Right lobe of liver (tissue), 6 donors: ENCODE measurements at regions of chr7 and their contacts with region 1.

Region 1: DNA sequence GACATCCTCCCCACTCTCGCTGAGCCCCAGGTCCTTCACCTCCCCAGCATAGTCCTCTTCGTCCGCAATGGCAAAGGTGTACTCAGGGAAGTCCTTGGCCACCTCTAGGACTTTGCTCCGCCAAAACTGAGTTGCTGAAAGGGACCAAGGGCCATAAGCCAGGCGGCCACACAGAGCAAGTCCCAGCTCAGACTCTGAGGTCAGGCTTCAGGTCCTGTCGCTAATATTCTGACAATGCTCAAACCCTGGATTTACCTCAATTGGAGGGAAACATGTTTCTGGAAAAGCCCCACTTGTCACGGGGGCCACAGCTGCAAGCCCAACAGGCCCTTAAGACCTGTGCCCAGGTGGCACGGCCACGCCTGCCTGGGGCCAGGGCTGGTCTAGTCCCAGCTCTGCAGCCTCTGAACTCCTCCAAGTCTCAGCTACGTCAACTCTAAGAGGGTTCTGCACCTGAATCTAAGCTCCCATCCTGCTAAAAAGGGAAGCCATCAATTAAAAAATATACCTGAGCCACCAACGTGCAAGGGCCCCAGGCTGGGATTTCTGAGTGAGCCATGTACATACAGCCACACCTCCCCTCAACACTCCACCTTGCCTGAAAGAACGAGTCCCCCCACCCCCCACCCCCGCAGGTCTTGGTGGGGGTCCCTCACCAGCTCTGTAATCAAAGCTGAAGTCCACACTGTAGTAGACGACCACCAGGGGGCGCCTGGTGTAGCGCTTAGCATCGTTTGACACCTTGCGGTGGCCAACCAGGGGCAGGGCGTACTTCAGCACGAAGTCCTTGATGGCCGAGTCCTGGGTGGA is 22.9 kb downstream of the PDIA4 start:
- DNase-seq: peak; percentile 76 to 83 (median 82)
- ATAC-seq: peak; percentile 68 to 85 (median 76)
- H3K4me3 ChIP-seq: no peak overlapping the region
- H3K27ac ChIP-seq: no peak overlapping the region
- H3K4me1 ChIP-seq: no peaks in the 10 kb centered on the region
- H3K27me3 ChIP-seq: no peaks in the 10 kb centered on the region
- CTCF ChIP-seq: peak; percentile 66 to 77 (median 72)
- POLR2A ChIP-seq: no peak

Region 2: GRCh38 chr7:148838905-148839304 is 166.5 kb before region 1 on chr7:
- intact Hi-C with region 1: no loop called
- DNase-seq: no peak
- ATAC-seq: peak in 1 of 4 donors; percentile 24
- H3K4me3 ChIP-seq: no peak overlapping the region
- H3K27ac ChIP-seq: no peak overlapping the region
- H3K4me1 ChIP-seq: no peaks in the 10 kb centered on the region
- H3K27me3 ChIP-seq: no peaks in the 10 kb centered on the region
- CTCF ChIP-seq: no peak
- POLR2A ChIP-seq: no peak

Region 3: DNA sequence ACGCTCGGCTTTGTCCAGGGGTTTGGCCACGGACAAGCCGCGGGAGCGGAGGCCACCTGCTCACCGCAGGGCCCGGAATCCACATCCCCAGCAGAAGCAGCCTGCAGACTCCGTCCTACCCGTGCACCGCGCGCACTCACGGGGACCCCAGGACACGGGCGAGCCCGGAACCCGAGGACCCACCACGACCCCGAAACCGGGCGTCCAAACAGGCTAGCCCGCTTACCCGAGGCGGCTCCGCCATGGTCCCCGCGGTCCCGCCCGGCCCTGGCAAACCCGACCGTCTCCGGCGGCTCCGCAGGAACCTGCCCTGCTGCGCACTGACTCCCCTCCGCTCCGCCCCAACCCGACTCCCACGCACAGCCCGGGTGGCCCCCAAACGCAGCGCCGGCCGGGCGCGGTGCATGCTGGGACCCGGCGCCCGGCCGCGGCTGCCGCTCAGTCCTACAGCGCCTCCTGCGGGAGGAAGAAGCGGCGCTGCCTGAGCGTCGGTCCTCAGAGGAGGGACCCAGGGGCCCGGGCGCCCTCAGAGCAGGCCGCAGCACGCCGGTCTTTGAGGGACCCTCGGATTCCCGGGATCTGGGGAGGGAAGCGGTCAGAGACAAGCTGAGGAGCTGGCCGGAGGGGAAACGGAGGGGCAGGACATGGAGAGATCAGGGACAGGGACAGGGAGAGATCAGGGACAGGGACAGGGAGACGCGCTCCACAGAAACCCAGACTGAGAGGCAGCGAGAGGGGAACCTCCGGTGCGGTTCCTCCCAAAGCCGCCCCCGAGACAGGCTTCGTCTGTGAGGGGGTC is 85.2 kb after region 1 on chr7 and contains the start of gene ZNF786:
- intact Hi-C with region 1: loop called in 1 of 2 experiments (anchors 10 kb)
- DNase-seq: peak; percentile 89 to 91 (median 91)
- ATAC-seq: peak; percentile 94 to 98 (median 96)
- H3K4me3 ChIP-seq: peak within 1 kb of the TSS; percentile 98 to 99 (median 98)
- H3K27ac ChIP-seq: peak within 1 kb of the TSS; percentile 77 to 96 (median 81)
- H3K4me1 ChIP-seq: peaks cover 0 to 10% (median 2%) of the 10 kb centered on the region in 4 donors
- H3K27me3 ChIP-seq: no peaks in the 10 kb centered on the region
- CTCF ChIP-seq: peak; percentile 89 to 94 (median 92)
- POLR2A ChIP-seq: peak; percentile 86
- total RNA-seq, gene ZNF786: 2.0 to 2.7 (median 2.4) TPM